ENCODE measurements at regions of chr14 and their contacts with region 1.

Region 1: DNA sequence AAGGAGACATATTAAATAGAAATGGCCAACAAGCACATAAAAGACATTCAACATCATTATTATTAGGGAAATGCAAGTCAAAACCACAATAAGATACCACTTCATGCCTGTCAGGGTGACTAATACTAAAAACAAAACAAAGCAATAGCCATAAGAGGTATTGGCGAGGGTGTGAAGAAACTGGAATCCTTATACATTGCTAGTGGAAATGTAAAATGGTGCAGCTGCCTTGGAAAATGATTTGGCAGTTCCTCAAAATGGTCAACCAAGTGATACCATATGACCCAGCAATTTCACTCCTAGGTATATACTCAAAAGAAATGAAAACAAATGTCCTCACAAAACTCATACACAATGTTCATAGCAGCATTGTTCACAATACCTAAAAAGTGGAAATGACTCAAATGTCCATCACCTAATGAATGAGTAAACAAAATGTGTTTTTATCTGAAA is 27.0 kb downstream of the GPR135 start:
- DNase-seq: peak; percentile 75
- H3K4me3 ChIP-seq: no peak overlapping the region
- H3K27ac ChIP-seq: peak overlapping the region; percentile 70
- H3K4me1 ChIP-seq: peaks cover 29% of the 10 kb centered on the region
- H3K27me3 ChIP-seq: no peaks in the 10 kb centered on the region
- CTCF ChIP-seq: no peak
- POLR2A ChIP-seq: no peak

Region 2: DNA sequence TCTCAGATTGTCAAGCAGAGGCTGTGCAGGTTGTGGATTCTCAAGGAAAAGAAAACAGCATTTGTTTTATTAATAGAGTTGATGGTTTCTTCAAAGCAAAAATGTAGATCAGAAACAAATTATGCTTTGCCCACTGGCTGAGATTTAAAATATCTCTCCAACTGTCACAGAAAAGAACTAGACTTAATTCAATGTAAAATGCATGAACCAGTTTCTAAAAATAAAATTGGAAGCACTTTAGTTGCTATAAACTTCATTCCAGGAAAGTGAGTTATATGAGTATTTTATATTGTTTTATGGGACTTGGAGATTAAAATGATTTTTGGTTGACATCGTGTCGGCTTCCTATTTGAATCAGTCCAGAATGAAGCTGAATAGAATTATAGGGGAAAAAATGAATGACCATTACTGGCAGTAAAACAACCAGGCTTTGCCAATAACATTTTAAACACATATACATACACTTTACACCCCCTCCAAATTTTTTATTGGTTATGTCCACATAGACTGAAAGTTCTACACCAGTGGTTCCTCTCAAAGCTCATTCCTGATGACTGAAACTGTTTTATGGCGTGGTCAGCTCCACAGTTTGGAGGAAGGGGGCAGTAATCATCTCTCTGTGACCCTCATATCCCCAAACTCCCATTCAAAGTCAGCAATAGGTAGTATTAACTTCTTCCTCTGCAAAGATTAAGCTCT is 305.3 kb before region 1 on chr14:
- CTCF ChIA-PET with region 1: interaction called, 69 read pairs
- POLR2A ChIA-PET with region 1: no interaction called
- dilution Hi-C with region 1: no loop called
- intact Hi-C with region 1: no loop called
- DNase-seq: peak; percentile 31
- H3K4me3 ChIP-seq: no peak overlapping the region
- H3K27ac ChIP-seq: no peak overlapping the region
- H3K4me1 ChIP-seq: no peaks in the 10 kb centered on the region
- H3K27me3 ChIP-seq: peaks cover 0 to 2% of the 10 kb centered on the region in 2 experiments
- CTCF ChIP-seq: peak in 1 of 2 donors; percentile 34
- POLR2A ChIP-seq: no peak

Region 3: DNA sequence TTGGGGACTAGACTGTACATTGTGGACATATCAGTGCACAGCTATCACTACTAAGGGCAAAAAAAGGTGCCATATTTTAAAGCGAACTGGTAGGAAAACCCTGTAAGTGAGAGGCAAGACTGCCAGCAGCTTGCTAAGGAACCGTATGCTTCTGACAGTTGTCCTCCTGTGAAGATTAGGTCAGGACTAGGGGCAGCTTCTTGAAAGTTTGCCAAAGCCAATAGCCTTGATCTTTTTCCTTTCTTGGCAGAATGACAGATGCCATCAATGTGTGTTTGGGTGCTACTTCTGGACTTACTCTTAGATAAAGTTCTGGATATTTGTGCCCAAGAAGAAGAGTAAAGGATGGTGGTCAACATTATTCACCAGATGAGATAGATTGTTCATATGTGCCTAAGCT is 242.3 kb before region 1 on chr14:
- CTCF ChIA-PET with region 1: interaction called, 25 read pairs
- POLR2A ChIA-PET with region 1: no interaction called
- dilution Hi-C with region 1: no loop called
- intact Hi-C with region 1: no loop called
- DNase-seq: no peak
- H3K4me3 ChIP-seq: no peak overlapping the region
- H3K27ac ChIP-seq: no peak overlapping the region
- H3K4me1 ChIP-seq: no peaks in the 10 kb centered on the region
- H3K27me3 ChIP-seq: no peaks in the 10 kb centered on the region
- CTCF ChIP-seq: no peak
- POLR2A ChIP-seq: no peak

Region 4: GRCh38 chr14:59330455-59330854 is 107.8 kb before region 1 on chr14:
- CTCF ChIA-PET with region 1: interaction called, 15 read pairs
- POLR2A ChIA-PET with region 1: no interaction called
- dilution Hi-C with region 1: no loop called
- intact Hi-C with region 1: no loop called
- DNase-seq: no peak
- H3K4me3 ChIP-seq: no peak overlapping the region
- H3K27ac ChIP-seq: no peak overlapping the region
- H3K4me1 ChIP-seq: peaks cover 33% of the 10 kb centered on the region
- H3K27me3 ChIP-seq: no peaks in the 10 kb centered on the region
- CTCF ChIP-seq: no peak
- POLR2A ChIP-seq: no peak

Region 5: DNA sequence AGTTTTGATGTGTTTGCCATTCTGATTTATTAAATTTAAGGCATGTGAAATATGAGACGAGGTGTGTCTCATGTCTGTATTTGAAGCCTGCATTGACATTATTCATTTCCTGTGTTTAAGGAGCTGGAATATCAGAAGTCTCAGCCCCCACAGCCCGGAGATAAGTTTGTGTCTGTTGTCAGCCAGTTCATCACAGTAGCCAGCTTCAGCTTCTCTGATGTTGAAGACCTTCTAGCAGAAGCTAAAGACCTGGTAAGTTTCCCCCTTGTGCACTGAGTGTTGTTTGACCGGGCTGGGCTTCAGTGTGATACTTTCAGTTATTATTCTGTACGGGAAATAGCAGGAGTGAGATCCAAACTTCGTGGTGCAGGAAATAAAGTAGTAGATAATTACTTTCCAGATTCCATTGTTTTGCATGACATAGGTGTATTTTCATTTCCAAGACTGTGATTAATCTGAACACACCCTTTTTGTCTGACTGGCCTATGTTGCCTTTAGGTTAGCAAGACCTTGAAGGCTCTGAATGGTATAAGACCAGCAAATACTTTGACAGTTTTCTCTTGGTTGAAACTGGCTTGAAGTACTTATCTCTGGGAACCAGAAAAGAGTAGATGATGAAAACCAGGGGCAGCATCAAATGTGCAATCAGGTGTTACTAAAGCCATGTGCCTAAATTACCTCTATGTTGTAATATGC is 74.5 kb before region 1 on chr14:
- CTCF ChIA-PET with region 1: no interaction called
- POLR2A ChIA-PET with region 1: no interaction called
- dilution Hi-C with region 1: no loop called
- intact Hi-C with region 1: loop called (anchors 2 kb)
- DNase-seq: peak; percentile 74
- H3K4me3 ChIP-seq: peak overlapping the region in 1 of 3 experiments; percentile 40
- H3K27ac ChIP-seq: peak overlapping the region; percentile 73
- H3K4me1 ChIP-seq: peaks cover 43% of the 10 kb centered on the region
- H3K27me3 ChIP-seq: no peaks in the 10 kb centered on the region
- CTCF ChIP-seq: no peak
- POLR2A ChIP-seq: no peak

Region 6: GRCh38 chr14:59454131-59454530 is 15.9 kb after region 1 on chr14:
- CTCF ChIA-PET with region 1: no interaction called
- POLR2A ChIA-PET with region 1: no interaction called
- dilution Hi-C with region 1: no loop called
- intact Hi-C with region 1: no loop called
- DNase-seq: peak; percentile 50
- H3K4me3 ChIP-seq: no peak overlapping the region
- H3K27ac ChIP-seq: no peak overlapping the region
- H3K4me1 ChIP-seq: peaks cover 4% of the 10 kb centered on the region
- H3K27me3 ChIP-seq: no peaks in the 10 kb centered on the region
- CTCF ChIP-seq: no peak
- POLR2A ChIP-seq: no peak